ENCODE measurements at regions of chr11 and their contacts with region 1.

Region 1: DNA sequence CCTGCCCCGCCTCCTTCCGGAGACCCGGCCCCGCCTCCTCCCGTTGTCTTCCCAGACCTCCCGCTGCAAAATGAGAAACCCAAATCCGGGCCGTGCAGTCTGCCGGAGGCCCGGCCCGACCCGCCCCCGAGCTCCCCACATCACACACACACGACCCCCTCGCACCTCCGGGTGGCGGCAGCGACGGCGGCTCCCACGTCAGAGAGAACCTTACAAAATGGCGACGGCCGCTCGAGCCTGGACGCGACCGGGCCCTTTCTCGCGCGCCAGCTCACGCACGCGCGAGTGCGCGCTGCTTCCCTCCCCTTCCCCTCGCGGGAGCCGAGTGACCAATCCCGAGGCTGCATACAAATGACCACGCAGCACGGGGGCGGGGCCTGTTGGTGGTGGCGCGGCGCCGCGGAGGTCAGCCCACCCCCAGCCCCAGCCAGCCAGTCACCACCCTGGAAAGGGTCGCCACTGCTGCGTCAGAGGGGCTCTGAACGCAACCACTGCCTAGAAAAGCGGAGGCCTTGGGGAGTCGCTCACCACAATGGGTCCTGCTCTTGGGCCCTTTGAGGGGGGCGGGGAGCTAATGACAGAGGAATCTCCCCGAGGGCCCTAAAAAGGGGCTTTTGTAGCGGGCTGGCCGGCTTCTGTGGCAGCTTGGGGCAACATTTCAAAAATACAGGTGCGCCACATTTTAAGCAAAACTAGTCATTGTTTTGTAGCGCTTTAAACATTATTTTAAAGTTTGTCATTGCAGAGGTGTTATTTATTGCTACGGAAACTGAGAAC is at the start of gene RBM4B:
- DNase-seq: peak; percentile 98 to 99
- H3K4me3 ChIP-seq: peak within 1 kb of the TSS; percentile 63 to 76 (median 70)
- H3K27ac ChIP-seq: peak within 1 kb of the TSS; percentile 95 to 97 (median 96)
- H3K4me1 ChIP-seq: peaks cover 17 to 54% (median 38%) of the 10 kb centered on the region in 4 donors
- H3K27me3 ChIP-seq: no peaks in the 10 kb centered on the region
- CTCF ChIP-seq: no peak
- EP300 ChIP-seq: no peak
- POLR2A ChIP-seq: peak in 2 of 4 donors; percentile 9 to 32
- total RNA-seq, gene RBM4B: 15.6 to 61.4 (median 22.0) TPM in 4 of 5 donors, not detected in the other

Region 2: GRCh38 chr11:66373261-66373660 is 304.5 kb before region 1 on chr11:
- intact Hi-C with region 1: no loop called
- DNase-seq: peak in 1 of 2 donors; percentile 9
- H3K4me3 ChIP-seq: no peak overlapping the region
- H3K27ac ChIP-seq: no peak overlapping the region
- H3K4me1 ChIP-seq: peaks cover 17 to 42% (median 30%) of the 10 kb centered on the region in 4 donors
- H3K27me3 ChIP-seq: peaks cover 6 to 56% (median 11%) of the 10 kb centered on the region in 3 donors
- CTCF ChIP-seq: no peak
- EP300 ChIP-seq: no peak
- POLR2A ChIP-seq: no peak

Region 3: DNA sequence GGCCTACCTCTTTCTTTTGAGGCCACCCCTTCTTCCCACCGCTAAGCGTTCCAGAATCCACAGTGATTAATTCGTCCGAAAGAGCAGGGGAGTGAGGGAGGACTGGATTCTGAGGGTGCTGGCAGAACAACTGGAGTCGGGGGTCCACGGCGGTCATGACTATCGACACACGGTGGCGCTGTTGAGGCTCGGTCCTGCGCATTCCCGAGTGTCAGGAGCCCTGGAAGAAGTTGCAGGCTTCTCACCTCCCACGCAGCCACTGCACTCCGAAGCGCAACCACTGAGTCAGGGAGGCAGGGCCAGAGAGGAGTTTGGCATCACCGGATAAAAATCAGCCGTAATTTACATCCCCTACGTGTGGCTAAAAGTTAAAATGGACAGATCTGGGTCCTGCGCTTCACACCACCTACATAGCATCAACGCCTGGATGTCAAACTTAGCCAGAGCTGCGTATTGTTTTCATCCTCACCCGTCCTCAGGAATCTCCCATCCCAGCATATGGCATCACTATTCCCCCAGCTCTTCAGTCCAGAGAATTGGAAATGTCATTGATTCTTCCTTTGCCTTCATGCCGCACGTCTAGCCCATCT is 98.7 kb before region 1 on chr11:
- intact Hi-C with region 1: loop called (anchors 2 kb)
- DNase-seq: peak; percentile 84 to 89
- H3K4me3 ChIP-seq: no peak overlapping the region
- H3K27ac ChIP-seq: no peak overlapping the region
- H3K4me1 ChIP-seq: peaks cover 3 to 8% (median 6%) of the 10 kb centered on the region in 4 donors
- H3K27me3 ChIP-seq: no peaks in the 10 kb centered on the region
- CTCF ChIP-seq: peak in 5 of 7 experiments; percentile 74 to 85 (median 78)
- EP300 ChIP-seq: no peak
- POLR2A ChIP-seq: no peak